MCF 10A (cell line): ENCODE measurements at regions of chr15 and their contacts with region 1.

Region 1: DNA sequence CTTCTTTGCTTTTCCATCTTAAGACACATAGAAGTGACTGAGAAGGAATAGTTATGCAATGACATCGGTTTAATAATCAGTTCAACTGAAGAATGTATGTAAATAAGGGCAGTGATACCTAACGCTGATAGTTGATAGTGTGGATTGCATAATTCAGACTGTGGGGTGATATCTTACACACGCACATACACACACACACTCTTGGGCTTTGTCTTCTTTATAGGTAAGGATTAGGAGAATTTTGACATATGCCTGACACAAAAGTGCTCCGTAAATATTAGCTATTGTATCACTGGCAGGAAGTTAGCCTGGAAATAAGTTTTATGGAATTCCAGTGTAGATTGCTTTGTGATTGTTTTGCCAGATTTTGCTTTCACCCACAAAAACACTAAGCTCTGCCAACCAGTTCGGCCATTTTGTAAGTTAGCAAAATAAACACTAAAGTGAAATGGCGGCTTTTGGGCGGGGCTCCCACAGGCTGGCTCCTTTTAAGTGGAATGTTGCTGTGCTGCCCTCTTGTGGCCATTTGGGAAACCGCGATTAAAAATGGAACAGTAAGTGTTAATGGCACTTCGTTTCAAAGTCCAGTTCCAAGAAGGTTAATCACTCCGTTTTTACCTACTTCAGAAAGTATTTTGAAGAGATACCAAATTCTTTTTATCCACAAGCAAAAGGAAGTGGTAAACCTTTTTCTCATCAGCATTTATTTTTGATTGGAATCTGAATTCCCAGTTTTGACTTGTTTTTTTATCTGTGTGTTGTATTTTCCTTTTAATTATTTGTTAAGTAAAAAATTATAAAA is 17.7 kb downstream of the CHD2 start:
- DNase-seq: peak; percentile 96
- H3K4me3 Mint-ChIP-seq: peak overlapping the region; percentile 57
- H3K27ac Mint-ChIP-seq: peak overlapping the region; percentile 95
- H3K4me1 Mint-ChIP-seq: peaks cover 53% of the 10 kb centered on the region
- H3K27me3 Mint-ChIP-seq: no peaks in the 10 kb centered on the region
- CTCF ChIP-seq: peak; percentile 78

Region 2: DNA sequence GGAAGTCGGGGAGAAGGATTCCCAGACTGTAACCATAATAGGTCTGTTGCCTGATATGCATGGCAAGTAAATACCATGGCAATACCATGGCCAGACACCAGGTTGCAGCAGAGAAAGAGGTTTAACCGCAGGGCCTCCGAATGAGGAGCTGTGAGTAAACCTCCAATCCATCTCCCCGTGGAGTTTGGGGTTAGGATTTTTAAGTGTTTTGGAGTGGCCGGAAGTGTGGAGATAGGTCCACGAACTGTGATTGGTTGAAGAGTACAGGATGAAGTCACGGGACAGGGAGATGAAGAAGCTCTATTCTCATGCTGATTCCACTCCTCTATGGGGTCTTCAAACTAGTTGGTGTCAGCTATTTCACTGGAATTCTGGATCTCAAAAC is 396.2 kb before region 1 on chr15:
- CTCF ChIA-PET with region 1: no interaction called
- POLR2A ChIA-PET with region 1: no interaction called
- intact Hi-C with region 1: loop called (anchors 5 kb)
- DNase-seq: peak; percentile 77
- H3K4me3 Mint-ChIP-seq: no peak overlapping the region
- H3K27ac Mint-ChIP-seq: no peak overlapping the region
- H3K4me1 Mint-ChIP-seq: peaks cover 6% of the 10 kb centered on the region
- H3K27me3 Mint-ChIP-seq: peaks cover 11% of the 10 kb centered on the region
- CTCF ChIP-seq: peak; percentile 59

Region 3: DNA sequence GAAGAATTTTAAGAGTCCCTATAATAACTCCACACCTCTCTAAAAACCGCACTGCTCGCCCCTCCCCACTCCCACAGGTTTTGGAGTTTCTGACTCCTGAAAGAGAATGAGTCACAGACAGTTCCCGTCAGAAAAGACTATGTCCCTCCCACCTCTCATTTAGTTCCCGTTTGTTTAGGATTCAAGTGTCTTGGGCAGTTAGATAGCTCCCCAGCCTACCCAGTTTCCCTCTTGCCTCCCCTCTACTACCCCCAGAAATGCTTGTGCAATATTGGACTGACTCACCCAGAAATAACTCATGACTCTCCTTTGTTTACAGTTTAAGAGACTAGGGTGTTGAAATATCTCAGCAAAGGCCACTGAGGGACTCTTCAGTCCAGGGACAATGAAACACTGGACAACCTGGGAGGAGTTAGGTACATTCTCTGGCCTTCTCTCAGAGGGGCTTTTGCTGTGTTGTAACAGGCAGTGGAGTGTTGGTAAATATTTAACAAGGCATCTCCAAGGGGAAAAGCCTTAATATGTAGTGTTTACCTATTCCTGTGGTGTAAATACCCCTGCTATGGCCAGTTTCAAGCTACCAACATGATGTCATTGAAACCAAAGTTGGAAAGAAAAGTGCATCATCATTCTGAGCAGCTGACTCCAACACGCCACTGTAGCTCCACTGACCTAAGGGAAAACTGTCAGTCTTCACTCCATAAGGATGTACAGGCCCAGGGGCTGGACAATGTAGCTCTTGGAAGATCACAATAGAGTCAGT is 113.8 kb before region 1 on chr15:
- CTCF ChIA-PET with region 1: interaction called, 53 read pairs
- POLR2A ChIA-PET with region 1: interaction called, 266 read pairs
- intact Hi-C with region 1: loop called (anchors 1 kb)
- DNase-seq: peak; percentile 100
- H3K4me3 Mint-ChIP-seq: peak overlapping the region; percentile 1
- H3K27ac Mint-ChIP-seq: peak overlapping the region; percentile 98
- H3K4me1 Mint-ChIP-seq: peaks cover 34% of the 10 kb centered on the region
- H3K27me3 Mint-ChIP-seq: no peaks in the 10 kb centered on the region
- CTCF ChIP-seq: no peak

Region 4: GRCh38 chr15:92820236-92821021 is 97.4 kb before region 1 on chr15:
- CTCF ChIA-PET with region 1: interaction called, 8 read pairs
- POLR2A ChIA-PET with region 1: interaction called, 14 read pairs
- intact Hi-C with region 1: no loop called
- DNase-seq: peak; percentile 91
- H3K4me3 Mint-ChIP-seq: peak overlapping the region; percentile 72
- H3K27ac Mint-ChIP-seq: peak overlapping the region; percentile 98
- H3K4me1 Mint-ChIP-seq: peaks cover 25% of the 10 kb centered on the region
- H3K27me3 Mint-ChIP-seq: no peaks in the 10 kb centered on the region
- CTCF ChIP-seq: no peak

Region 5: DNA sequence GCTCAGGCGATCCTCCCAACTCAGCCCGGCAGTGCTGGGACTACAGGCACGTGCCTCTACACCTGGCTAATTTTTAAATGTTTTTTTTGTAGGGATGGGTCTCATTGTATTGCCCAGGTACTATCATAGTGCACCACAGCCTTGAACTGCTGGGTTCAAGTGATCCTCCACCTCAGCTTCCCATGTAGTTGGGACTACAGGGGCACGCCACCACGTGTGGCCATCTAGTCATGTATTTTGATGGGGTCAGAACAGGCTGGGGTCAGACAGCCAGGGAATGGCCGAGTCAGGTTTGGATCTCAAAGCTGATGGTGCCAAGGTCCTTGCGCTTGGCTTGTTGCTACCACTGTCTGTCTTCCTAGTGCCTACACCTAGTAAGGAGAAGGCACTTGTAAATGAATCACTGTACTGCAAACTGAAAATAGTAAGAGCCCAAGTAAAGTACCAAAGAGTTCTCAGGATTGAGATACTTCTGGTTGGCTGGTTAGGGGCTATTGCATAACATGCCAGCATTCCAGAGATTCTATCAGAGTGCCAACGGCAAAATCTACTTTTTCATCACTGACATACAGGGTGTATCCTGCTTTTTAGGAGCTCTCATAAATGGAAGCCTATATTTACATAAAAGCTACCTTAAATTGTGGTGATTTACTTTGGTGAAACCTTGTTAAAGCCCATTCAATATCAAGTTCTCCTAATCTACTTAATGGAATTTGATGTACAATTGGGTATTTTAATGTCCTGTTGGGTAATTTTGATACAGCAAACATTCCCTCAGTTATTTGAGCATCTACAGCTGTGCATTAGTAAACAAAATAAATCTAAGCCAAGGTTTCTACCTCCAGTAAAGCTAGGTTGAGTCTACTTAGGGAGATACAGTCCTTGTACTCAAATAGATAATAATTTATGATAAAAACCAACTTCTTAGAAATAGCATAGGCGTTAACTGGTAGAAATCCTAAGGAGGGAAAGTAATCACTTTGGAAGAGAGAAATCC is 48.5 kb before region 1 on chr15:
- CTCF ChIA-PET with region 1: interaction called, 7 read pairs
- POLR2A ChIA-PET with region 1: interaction called, 12 read pairs
- intact Hi-C with region 1: no loop called
- DNase-seq: peak; percentile 81
- H3K4me3 Mint-ChIP-seq: peak overlapping the region; percentile 48
- H3K27ac Mint-ChIP-seq: peak overlapping the region; percentile 80
- H3K4me1 Mint-ChIP-seq: peaks cover 24% of the 10 kb centered on the region
- H3K27me3 Mint-ChIP-seq: no peaks in the 10 kb centered on the region
- CTCF ChIP-seq: no peak

Region 6: DNA sequence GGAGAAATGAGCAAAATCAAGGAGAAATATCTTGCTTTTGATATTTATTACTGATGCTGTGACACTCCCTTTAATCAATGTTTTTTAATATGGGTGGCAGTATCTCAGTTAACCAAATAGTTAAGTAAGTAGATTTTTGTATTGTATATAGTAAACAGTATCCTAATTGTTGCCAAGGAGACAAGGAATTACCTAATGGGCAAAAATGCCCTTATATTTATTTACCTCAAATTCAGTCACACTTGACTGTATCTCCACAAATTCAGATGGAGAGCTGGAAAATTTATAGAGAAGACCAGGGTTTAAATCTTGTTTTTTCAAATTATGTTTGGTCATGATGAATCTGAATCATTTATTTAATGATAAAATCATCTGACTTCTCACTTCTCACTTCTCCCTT is 21.2 kb before region 1 on chr15:
- CTCF ChIA-PET with region 1: interaction called, 7 read pairs
- POLR2A ChIA-PET with region 1: interaction called, 381 read pairs
- intact Hi-C with region 1: no loop called
- DNase-seq: no peak
- H3K4me3 Mint-ChIP-seq: no peak overlapping the region
- H3K27ac Mint-ChIP-seq: peak overlapping the region; percentile 57
- H3K4me1 Mint-ChIP-seq: peaks cover 24% of the 10 kb centered on the region
- H3K27me3 Mint-ChIP-seq: no peaks in the 10 kb centered on the region
- CTCF ChIP-seq: no peak

Region 7: DNA sequence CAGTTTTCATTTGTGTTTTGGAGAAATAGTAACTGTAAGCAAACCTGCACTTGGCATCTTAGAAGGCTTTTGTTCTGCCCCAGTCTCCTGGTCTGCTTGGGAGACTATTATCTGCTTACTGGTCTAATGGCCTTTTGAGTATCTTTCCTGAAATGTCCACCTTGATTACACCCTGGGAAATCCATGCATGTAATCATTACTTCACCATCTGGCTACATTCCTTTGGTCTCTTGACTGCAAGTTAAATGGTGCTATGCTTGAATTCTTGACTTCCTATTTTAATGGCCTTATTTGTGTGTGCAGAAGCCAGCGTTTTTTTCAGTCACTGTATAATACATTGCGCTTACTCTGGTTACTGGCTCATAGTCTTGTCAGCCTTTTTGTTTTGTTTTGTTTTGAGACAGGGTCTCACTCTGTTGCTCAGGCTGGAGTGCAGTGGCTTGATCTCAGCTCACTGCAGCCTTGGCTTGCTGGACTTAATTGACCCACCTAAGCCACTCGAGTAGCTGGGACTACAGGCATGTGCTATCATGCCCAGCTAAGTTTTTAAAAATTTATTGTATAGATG is 12.3 kb after region 1 on chr15:
- CTCF ChIA-PET with region 1: interaction called, 14 read pairs
- POLR2A ChIA-PET with region 1: interaction called, 8 read pairs
- intact Hi-C with region 1: no loop called
- DNase-seq: no peak
- H3K4me3 Mint-ChIP-seq: no peak overlapping the region
- H3K27ac Mint-ChIP-seq: peak overlapping the region; percentile 57
- H3K4me1 Mint-ChIP-seq: peaks cover 16% of the 10 kb centered on the region
- H3K27me3 Mint-ChIP-seq: no peaks in the 10 kb centered on the region
- CTCF ChIP-seq: no peak